ENCODE measurements at regions of chr3 and their contacts with region 1.

Region 1: DNA sequence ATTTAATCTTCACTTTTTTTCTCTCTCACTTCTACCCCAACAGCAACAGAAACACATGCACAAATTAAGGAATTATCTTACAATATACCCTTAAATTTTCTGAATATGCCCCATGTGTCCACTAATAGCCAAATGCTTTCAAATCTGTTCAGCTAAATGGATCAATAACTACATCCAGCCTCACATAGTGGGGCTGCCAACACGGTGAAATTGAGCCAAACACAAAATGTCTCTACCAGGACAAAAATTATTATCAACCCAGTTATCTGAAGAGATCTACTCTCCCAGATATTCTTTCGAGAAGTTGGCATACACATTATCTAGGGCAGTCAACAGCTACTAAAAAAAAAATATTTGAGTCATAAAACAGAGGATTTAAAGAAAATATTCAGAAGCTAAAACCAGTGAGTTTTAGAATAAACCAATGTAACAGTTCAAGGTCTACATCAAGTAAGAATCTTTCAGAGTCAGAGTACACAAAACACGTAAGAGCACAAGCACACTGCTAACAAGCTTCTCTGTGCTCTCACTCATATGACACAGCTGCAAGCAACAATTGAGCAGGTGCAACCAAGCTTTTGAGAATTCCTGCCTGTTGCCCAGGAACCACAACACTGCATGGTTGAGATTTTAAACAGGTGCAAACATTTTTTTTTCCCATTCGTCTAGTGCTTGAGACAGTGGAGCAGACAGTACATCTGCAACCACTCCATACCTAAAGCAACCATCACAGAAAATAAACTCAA is 247.7 kb downstream of the ZBTB20 start:
- DNase-seq: peak; percentile 40 to 63
- ATAC-seq: peak; percentile 88 to 93
- H3K4me3 ChIP-seq: peak overlapping the region in 3 of 4 donors; percentile 2 to 32 (median 22)
- H3K27ac ChIP-seq: peak overlapping the region; percentile 64 to 78 (median 68)
- H3K4me1 ChIP-seq: peaks cover 52 to 56% of the 10 kb centered on the region in 2 donors
- H3K27me3 ChIP-seq: no peaks in the 10 kb centered on the region
- CTCF ChIP-seq: no peak
- POLR2A ChIP-seq: no peak

Region 2: DNA sequence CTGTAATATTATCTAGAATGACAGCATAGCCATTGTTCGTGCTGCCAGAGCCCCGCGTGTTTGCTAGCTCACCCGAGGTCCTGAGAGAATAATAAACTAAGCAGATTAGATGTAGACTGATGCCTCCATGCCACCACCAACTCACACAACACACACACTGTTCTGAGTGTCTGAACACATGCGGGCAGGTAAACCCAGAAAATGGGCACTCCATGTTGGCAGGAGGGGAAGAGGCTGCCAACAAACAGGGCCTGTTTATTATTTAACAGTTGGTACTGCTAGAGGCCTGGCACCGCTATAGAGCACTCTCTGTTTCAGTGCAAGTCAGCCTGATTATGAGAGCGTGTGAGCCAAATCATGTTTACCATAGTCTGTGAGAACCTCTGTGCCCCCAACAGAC is 51.3 kb before region 1 on chr3:
- in situ Hi-C with region 1: no loop called
- intact Hi-C with region 1: loop called (anchors 5 kb)
- DNase-seq: no peak
- ATAC-seq: peak; percentile 34 to 61
- H3K4me3 ChIP-seq: no peak overlapping the region
- H3K27ac ChIP-seq: peak overlapping the region in 3 of 4 donors; percentile 7 to 65 (median 29)
- H3K4me1 ChIP-seq: peaks cover 33 to 34% of the 10 kb centered on the region in 2 donors
- H3K27me3 ChIP-seq: no peaks in the 10 kb centered on the region
- CTCF ChIP-seq: no peak
- POLR2A ChIP-seq: no peak

Region 3: GRCh38 chr3:114863848-114864247 is 35.5 kb before region 1 on chr3:
- in situ Hi-C with region 1: no loop called
- intact Hi-C with region 1: no loop called
- DNase-seq: no peak
- ATAC-seq: no peak
- H3K4me3 ChIP-seq: peak overlapping the region; percentile 17 to 36 (median 30)
- H3K27ac ChIP-seq: peak overlapping the region; percentile 2 to 66 (median 34)
- H3K4me1 ChIP-seq: peaks cover 28 to 45% of the 10 kb centered on the region in 2 donors
- H3K27me3 ChIP-seq: no peaks in the 10 kb centered on the region
- CTCF ChIP-seq: no peak
- POLR2A ChIP-seq: no peak

Region 4: DNA sequence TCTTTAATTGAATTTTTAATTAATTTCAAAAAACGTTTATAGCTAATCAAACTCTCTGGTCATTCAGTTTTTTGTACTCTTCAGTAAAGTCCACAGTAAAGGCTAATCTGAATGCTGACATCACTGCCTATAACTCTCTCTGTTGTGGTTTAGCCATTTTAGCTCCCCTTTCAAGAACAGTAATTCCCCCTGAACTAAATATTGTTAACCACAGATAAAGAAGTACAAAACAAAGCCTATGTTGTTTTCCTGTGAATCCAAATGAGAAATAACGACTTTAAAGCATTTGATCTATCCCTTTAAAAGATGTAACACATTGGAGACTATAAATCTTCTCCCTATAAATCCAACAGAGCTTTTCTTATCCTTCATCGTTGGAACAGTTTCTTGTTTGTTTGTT is 153.5 kb after region 1 on chr3:
- in situ Hi-C with region 1: no loop called
- intact Hi-C with region 1: no loop called
- DNase-seq: no peak
- ATAC-seq: no peak
- H3K4me3 ChIP-seq: no peak overlapping the region
- H3K27ac ChIP-seq: no peak overlapping the region
- H3K4me1 ChIP-seq: no peaks in the 10 kb centered on the region
- H3K27me3 ChIP-seq: no peaks in the 10 kb centered on the region
- CTCF ChIP-seq: no peak
- POLR2A ChIP-seq: no peak